ENCODE measurements at regions of chr7 and their contacts with region 1.

Region 1: GRCh38 chr7:44797329-44798251 is 1.1 kb downstream of the PPIA start:
- DNase-seq: peak; percentile 92
- H3K4me3 ChIP-seq: peak overlapping the region; percentile 64
- H3K27ac ChIP-seq: peak overlapping the region; percentile 99
- H3K4me1 ChIP-seq: peaks cover 18% of the 10 kb centered on the region
- H3K27me3 ChIP-seq: no peaks in the 10 kb centered on the region
- CTCF ChIP-seq: peak; percentile 62

Region 2: GRCh38 chr7:43942997-43943704 is 854.4 kb before region 1 on chr7:
- CTCF ChIA-PET with region 1: no interaction called
- POLR2A ChIA-PET with region 1: no interaction called
- intact Hi-C with region 1: no loop called
- DNase-seq: no peak
- H3K4me3 ChIP-seq: no peak overlapping the region
- H3K27ac ChIP-seq: no peak overlapping the region
- H3K4me1 ChIP-seq: no peaks in the 10 kb centered on the region
- H3K27me3 ChIP-seq: no peaks in the 10 kb centered on the region
- CTCF ChIP-seq: no peak

Region 3: GRCh38 chr7:44201813-44202212 is 595.8 kb before region 1 on chr7:
- CTCF ChIA-PET with region 1: no interaction called
- POLR2A ChIA-PET with region 1: no interaction called
- intact Hi-C with region 1: no loop called
- DNase-seq: no peak
- H3K4me3 ChIP-seq: peak overlapping the region; percentile 96
- H3K27ac ChIP-seq: peak overlapping the region; percentile 78
- H3K4me1 ChIP-seq: no peaks in the 10 kb centered on the region
- H3K27me3 ChIP-seq: no peaks in the 10 kb centered on the region
- CTCF ChIP-seq: no peak

Region 4: DNA sequence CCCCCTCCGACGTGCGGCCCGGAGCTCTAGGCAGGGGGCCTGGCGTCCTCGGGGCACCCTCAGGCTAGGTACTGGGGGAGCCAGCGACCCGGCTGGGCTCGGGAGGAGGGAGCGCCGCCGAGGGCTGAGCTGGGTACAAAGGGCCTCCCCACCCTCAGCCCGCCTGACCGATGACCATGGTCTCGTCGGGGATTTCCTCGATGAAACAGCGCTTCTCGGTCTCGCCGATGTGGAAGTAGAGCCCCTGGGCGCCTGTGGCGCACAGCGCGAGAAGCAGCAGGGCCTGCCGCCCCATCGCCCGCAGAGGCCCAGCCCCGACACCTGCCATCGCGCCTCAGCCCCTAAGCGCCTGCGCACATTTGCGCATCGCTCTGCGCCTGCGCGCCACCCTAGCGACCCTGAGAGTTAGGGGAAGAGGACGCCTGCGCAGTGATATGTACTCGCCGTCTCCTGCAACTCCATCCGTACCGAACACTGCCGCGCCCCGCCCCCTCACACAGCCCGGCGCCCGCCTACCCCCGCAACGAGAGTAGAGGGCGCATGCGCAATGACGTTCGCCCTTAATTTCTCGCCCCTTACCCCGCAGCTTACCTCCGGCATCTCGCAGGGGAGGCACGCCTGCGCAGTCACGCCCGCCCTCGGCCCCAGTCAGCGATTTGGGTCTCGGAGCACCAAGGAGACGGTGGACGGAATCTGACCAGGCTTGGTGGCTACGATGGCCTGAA is 215.5 kb before region 1 on chr7 and contains the start of gene TMED4:
- CTCF ChIA-PET with region 1: no interaction called
- POLR2A ChIA-PET with region 1: no interaction called
- intact Hi-C with region 1: loop called (anchors 5 kb)
- DNase-seq: peak; percentile 99
- H3K4me3 ChIP-seq: peak within 1 kb of the TSS; percentile 88
- H3K27ac ChIP-seq: peak within 1 kb of the TSS; percentile 92
- H3K4me1 ChIP-seq: peaks cover 6% of the 10 kb centered on the region
- H3K27me3 ChIP-seq: no peaks in the 10 kb centered on the region
- CTCF ChIP-seq: no peak
- total RNA-seq, gene TMED4: 77.6 and 79.5 TPM in 2 replicates

Region 5: GRCh38 chr7:44606450-44607254 is 190.9 kb before region 1 on chr7 and contains the start of gene OGDH:
- CTCF ChIA-PET with region 1: no interaction called
- POLR2A ChIA-PET with region 1: no interaction called
- intact Hi-C with region 1: loop called (anchors 5 kb)
- DNase-seq: peak; percentile 99
- H3K4me3 ChIP-seq: peak within 1 kb of the TSS; percentile 59
- H3K27ac ChIP-seq: peak within 1 kb of the TSS; percentile 86
- H3K4me1 ChIP-seq: peaks cover 6% of the 10 kb centered on the region
- H3K27me3 ChIP-seq: no peaks in the 10 kb centered on the region
- CTCF ChIP-seq: no peak
- total RNA-seq, gene OGDH: 111 and 113 TPM in 2 replicates

Region 6: GRCh38 chr7:44748045-44748947 is 49.3 kb before region 1 on chr7 and contains the start of gene ZMIZ2:
- CTCF ChIA-PET with region 1: no interaction called
- POLR2A ChIA-PET with region 1: interaction called, 6 read pairs
- intact Hi-C with region 1: loop called (anchors 1 kb)
- DNase-seq: peak; percentile 90
- H3K4me3 ChIP-seq: peak within 1 kb of the TSS; percentile 83
- H3K27ac ChIP-seq: peak within 1 kb of the TSS; percentile 97
- H3K4me1 ChIP-seq: peaks cover 13% of the 10 kb centered on the region
- H3K27me3 ChIP-seq: no peaks in the 10 kb centered on the region
- CTCF ChIP-seq: no peak
- total RNA-seq, gene ZMIZ2: 108 and 114 TPM in 2 replicates

Region 7: GRCh38 chr7:44847508-44847920 is 49.9 kb after region 1 on chr7:
- CTCF ChIA-PET with region 1: no interaction called
- POLR2A ChIA-PET with region 1: no interaction called
- intact Hi-C with region 1: loop called (anchors 1 kb)
- DNase-seq: peak; percentile 91
- H3K4me3 ChIP-seq: peak overlapping the region; percentile 77
- H3K27ac ChIP-seq: peak overlapping the region; percentile 98
- H3K4me1 ChIP-seq: peaks cover 20% of the 10 kb centered on the region
- H3K27me3 ChIP-seq: no peaks in the 10 kb centered on the region
- CTCF ChIP-seq: peak; percentile 80

Region 8: GRCh38 chr7:44914992-44915607 is 117.5 kb after region 1 on chr7:
- CTCF ChIA-PET with region 1: no interaction called
- POLR2A ChIA-PET with region 1: no interaction called
- intact Hi-C with region 1: no loop called
- DNase-seq: no peak
- H3K4me3 ChIP-seq: no peak overlapping the region
- H3K27ac ChIP-seq: no peak overlapping the region
- H3K4me1 ChIP-seq: no peaks in the 10 kb centered on the region
- H3K27me3 ChIP-seq: no peaks in the 10 kb centered on the region
- CTCF ChIP-seq: no peak

Measured in A673 (cell line).